CD8-positive, alpha-beta T cell (primary cell): ENCODE measurements at regions of chr2 and their contacts with region 1.

Region 1: GRCh38 chr2:24551016-24551415 is 60.0 kb downstream of the NCOA1 start:
- DNase-seq: no peak
- ATAC-seq: no peak
- H3K4me3 ChIP-seq: no peak overlapping the region
- H3K4me3 Mint-ChIP-seq: no peak overlapping the region
- H3K27ac ChIP-seq: no peak overlapping the region
- H3K27ac Mint-ChIP-seq: no peak overlapping the region
- H3K4me1 ChIP-seq: peaks cover 7% of the 10 kb centered on the region
- H3K4me1 Mint-ChIP-seq: peaks cover 28% of the 10 kb centered on the region
- H3K27me3 ChIP-seq: no peaks in the 10 kb centered on the region
- H3K27me3 Mint-ChIP-seq: no peaks in the 10 kb centered on the region
- CTCF ChIP-seq: no peak

Region 2: DNA sequence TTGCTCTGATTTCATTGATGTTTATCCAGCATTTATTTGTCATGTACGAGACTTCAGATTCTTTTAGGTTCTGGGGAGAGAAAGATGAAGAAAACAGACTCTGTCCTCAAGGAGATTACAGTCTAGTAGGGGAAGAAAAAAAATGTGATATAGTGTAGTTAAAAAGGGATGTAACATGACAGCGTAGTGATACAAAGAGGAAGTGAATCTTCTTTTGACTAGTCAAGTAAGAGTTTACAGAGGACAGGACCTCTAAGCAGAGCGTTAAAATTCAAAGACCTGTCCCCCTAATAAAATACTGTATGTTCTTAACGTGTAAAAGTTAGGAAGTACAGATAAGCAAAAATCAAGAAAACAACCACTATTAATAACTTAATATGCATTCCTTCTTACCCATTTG is 12.3 kb before region 1 on chr2:
- CTCF ChIA-PET with region 1: no interaction called
- POLR2A ChIA-PET with region 1: no interaction called
- intact Hi-C with region 1: loop called in 1 of 2 experiments (anchors 2 kb)
- DNase-seq: no peak
- ATAC-seq: no peak
- H3K4me3 ChIP-seq: no peak overlapping the region
- H3K4me3 Mint-ChIP-seq: no peak overlapping the region
- H3K27ac ChIP-seq: no peak overlapping the region
- H3K27ac Mint-ChIP-seq: no peak overlapping the region
- H3K4me1 ChIP-seq: no peaks in the 10 kb centered on the region
- H3K4me1 Mint-ChIP-seq: peaks cover 45% of the 10 kb centered on the region
- H3K27me3 ChIP-seq: no peaks in the 10 kb centered on the region
- H3K27me3 Mint-ChIP-seq: no peaks in the 10 kb centered on the region
- CTCF ChIP-seq: no peak

Region 3: GRCh38 chr2:24672589-24672988 is 121.6 kb after region 1 on chr2:
- CTCF ChIA-PET with region 1: no interaction called
- POLR2A ChIA-PET with region 1: no interaction called
- intact Hi-C with region 1: no loop called
- DNase-seq: no peak
- ATAC-seq: no peak
- H3K4me3 ChIP-seq: no peak overlapping the region
- H3K4me3 Mint-ChIP-seq: no peak overlapping the region
- H3K27ac ChIP-seq: no peak overlapping the region
- H3K27ac Mint-ChIP-seq: no peak overlapping the region
- H3K4me1 ChIP-seq: no peaks in the 10 kb centered on the region
- H3K4me1 Mint-ChIP-seq: peaks cover 4% of the 10 kb centered on the region
- H3K27me3 ChIP-seq: no peaks in the 10 kb centered on the region
- H3K27me3 Mint-ChIP-seq: no peaks in the 10 kb centered on the region
- CTCF ChIP-seq: no peak